Endothelial cell of umbilical vein (primary cell): ENCODE measurements at regions of chr10 and their contacts with region 1.

Region 1: DNA sequence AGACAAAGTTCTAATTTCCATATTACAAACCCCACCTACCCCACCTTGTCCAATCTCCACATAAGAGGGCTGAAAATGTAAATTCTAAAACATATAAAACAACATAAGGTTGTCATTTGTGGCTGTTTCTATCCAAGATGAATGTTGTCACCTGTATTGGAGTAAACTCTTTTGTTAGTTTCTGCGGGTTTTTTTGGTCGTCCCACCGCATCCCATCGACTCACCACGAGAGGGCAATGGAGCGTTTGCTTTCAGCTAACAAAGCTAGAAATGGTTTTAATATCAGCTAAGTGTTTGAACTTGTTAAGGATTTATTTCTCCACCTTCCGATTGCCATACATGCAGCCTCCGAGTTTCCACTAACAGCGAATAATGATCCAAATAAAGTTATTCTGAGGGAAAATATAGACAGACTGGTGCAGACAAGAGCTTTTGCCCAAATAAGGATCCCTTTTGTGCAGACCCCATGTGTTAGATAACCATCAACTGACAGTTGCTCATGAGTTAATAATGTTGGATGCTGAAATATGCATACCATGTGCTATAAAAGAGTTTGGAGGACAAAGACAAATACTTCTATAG is 137.2 kb downstream of the ARID5B start:
- DNase-seq: peak; percentile 85
- H3K4me3 ChIP-seq: no peak overlapping the region
- H3K27ac ChIP-seq: no peak overlapping the region
- H3K4me1 ChIP-seq: peaks cover 11% of the 10 kb centered on the region
- H3K27me3 ChIP-seq: no peaks in the 10 kb centered on the region
- CTCF ChIP-seq: peak; percentile 78 to 85
- POLR2A ChIP-seq: no peak

Region 2: DNA sequence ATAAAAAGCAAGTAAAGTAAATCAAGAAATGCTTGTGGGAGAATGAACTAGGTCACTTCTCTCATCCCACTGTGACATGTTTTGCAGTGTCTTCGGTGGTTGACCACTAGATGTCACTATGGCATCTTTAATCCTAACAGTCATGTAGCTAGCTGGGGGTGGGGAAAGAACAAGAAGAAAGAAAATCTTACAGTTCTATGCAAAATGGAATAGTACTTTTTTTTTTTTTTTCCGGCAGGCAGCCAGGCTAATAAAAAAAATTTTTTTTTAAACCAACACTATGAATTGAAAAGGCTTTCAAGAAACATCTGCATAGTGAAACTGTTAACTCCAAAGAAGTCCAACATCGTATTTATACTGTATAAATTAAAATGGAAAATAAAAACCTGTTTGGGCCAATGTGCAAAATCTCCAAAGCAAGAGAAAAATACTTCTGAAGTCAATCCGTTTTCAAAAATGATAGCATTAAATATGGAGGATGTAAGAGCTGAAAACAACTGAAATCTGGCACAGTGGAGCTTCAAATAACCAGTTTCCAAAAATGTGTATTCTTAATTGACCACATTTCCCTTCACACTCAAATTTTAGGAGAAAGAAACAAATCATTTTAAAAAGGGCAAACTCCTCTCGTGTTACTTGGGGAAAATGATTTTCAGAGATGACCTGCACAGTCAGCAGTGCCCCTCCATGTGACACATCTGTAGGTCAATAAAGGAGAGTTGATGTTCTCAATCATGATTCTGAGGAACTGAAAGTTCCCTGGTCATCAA is 1221.9 kb before region 1 on chr10:
- CTCF ChIA-PET with region 1: interaction called, 8 read pairs
- POLR2A ChIA-PET with region 1: no interaction called
- dilution Hi-C with region 1: no loop called
- intact Hi-C with region 1: loop called (anchors 5 kb)
- DNase-seq: peak; percentile 88
- H3K4me3 ChIP-seq: no peak overlapping the region
- H3K27ac ChIP-seq: peak overlapping the region; percentile 36
- H3K4me1 ChIP-seq: peaks cover 26% of the 10 kb centered on the region
- H3K27me3 ChIP-seq: no peaks in the 10 kb centered on the region
- CTCF ChIP-seq: peak; percentile 64 to 71
- POLR2A ChIP-seq: no peak

Region 3: GRCh38 chr10:61903221-61903927 is 135.3 kb before region 1 on chr10:
- CTCF ChIA-PET with region 1: interaction called, 18 read pairs
- POLR2A ChIA-PET with region 1: no interaction called
- dilution Hi-C with region 1: no loop called
- intact Hi-C with region 1: loop called (anchors 1 kb)
- DNase-seq: no peak
- H3K4me3 ChIP-seq: peak overlapping the region; percentile 26 to 79 (median 65)
- H3K27ac ChIP-seq: peak overlapping the region; percentile 59
- H3K4me1 ChIP-seq: peaks cover 28% of the 10 kb centered on the region
- H3K27me3 ChIP-seq: no peaks in the 10 kb centered on the region
- CTCF ChIP-seq: peak; percentile 5 to 18
- POLR2A ChIP-seq: no peak

Region 4: GRCh38 chr10:61943674-61944410 is 94.9 kb before region 1 on chr10:
- CTCF ChIA-PET with region 1: no interaction called
- POLR2A ChIA-PET with region 1: no interaction called
- dilution Hi-C with region 1: no loop called
- intact Hi-C with region 1: no loop called
- DNase-seq: peak; percentile 80
- H3K4me3 ChIP-seq: peak overlapping the region in 1 of 3 experiments; percentile 66
- H3K27ac ChIP-seq: peak overlapping the region; percentile 58
- H3K4me1 ChIP-seq: peaks cover 32% of the 10 kb centered on the region
- H3K27me3 ChIP-seq: no peaks in the 10 kb centered on the region
- CTCF ChIP-seq: peak in 1 of 2 donors; percentile 18
- POLR2A ChIP-seq: no peak

Region 5: DNA sequence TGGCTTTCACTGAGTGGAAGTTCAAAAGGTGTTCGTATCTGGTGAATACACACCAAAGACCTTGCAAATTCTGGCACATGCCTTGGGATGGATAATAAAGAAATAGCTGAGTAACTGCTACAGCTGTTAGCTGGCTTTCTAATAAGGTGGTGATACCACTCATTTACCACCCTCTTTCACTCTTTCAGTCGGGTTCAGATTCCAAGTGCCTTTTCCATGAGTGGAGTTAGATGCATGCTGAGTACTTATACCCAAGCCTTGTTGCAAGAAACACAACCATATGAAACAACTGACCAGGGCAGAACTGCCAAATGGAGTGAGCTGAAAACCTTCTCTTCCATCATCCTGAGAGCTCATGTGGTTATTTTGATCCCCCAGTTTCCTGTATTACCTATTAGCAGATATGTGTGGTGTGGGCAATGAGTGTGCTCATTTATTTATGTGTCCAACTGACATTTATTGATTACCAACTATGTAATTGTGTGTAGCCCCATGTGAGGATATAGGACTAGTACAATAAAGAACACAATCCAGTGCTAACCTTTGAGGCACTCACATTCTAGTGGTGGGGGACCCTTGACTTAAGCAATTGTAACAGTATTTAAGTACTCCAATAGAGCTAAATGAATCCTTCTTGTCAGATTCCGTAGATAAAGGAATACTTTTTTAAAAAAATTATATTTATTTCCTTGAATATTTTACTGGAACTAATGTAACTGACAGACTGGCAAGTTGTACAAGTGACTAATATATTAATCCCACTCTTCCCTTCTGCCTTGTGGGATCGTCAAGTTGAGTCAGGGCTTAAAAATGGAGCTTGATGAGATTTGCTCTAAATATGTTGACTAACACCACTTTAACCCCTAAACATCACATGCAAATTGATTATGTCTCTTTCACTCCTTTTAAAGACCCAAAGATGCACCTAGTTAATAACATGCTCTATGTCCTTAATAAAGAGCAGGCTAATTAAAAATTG is 12.5 kb before region 1 on chr10:
- CTCF ChIA-PET with region 1: interaction called, 18 read pairs
- POLR2A ChIA-PET with region 1: no interaction called
- dilution Hi-C with region 1: no loop called
- intact Hi-C with region 1: no loop called
- DNase-seq: no peak
- H3K4me3 ChIP-seq: no peak overlapping the region
- H3K27ac ChIP-seq: no peak overlapping the region
- H3K4me1 ChIP-seq: peaks cover 12% of the 10 kb centered on the region
- H3K27me3 ChIP-seq: no peaks in the 10 kb centered on the region
- CTCF ChIP-seq: no peak
- POLR2A ChIP-seq: no peak

Region 6: GRCh38 chr10:62130948-62131347 is 92.2 kb after region 1 on chr10:
- CTCF ChIA-PET with region 1: interaction called, 14 read pairs
- POLR2A ChIA-PET with region 1: no interaction called
- dilution Hi-C with region 1: no loop called
- intact Hi-C with region 1: loop called (anchors 2 kb)
- DNase-seq: peak; percentile 99
- H3K4me3 ChIP-seq: no peak overlapping the region
- H3K27ac ChIP-seq: peak overlapping the region; percentile 78
- H3K4me1 ChIP-seq: peaks cover 29% of the 10 kb centered on the region
- H3K27me3 ChIP-seq: no peaks in the 10 kb centered on the region
- CTCF ChIP-seq: no peak
- POLR2A ChIP-seq: peak; percentile 51

Region 7: DNA sequence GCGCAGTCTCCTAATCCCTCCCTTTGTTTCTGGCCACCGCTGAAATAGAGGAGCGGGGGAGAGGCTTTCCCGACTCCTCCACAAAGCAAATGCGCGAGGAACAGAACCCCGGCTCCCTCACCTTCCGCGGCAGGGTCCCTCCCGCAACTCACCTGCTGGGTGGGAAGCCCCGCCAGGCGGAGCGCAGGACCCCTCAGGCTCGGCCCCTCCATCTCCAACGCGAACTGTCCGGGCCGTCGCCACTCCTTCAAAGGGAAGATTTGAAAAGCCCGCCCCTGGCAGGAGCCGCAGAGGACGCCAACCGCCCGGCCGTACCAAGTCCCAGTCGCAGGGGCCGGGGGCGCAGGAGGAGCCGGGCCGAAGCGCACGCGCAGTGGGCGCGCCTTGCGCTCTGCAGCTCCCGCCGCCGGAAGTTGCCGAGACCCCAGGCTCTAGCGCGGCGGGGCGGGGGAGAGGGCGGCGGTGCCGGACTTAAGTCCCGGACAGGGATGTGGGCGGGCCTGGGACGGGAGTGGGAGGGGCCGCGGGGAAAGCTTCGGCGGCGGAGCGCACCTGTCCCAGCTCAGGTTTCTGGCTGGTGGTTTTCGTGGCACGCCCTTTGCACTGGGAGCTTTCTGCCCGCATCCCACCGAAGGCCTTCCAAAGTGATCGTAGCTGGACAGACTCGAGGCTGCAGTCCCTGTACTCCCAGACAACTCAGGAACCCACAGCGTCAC is 229.9 kb after region 1 on chr10 and contains the start of gene RTKN2:
- CTCF ChIA-PET with region 1: interaction called, 25 read pairs
- POLR2A ChIA-PET with region 1: no interaction called
- dilution Hi-C with region 1: no loop called
- intact Hi-C with region 1: no loop called
- DNase-seq: peak; percentile 85
- H3K4me3 ChIP-seq: peak within 1 kb of the TSS; percentile 53 to 73 (median 72)
- H3K27ac ChIP-seq: no peak within 1 kb of the TSS
- H3K4me1 ChIP-seq: peaks cover 11% of the 10 kb centered on the region
- H3K27me3 ChIP-seq: peaks cover 0 to 2% of the 10 kb centered on the region in 2 experiments
- CTCF ChIP-seq: no peak
- POLR2A ChIP-seq: no peak
- total RNA-seq, gene RTKN2: 4.8 and 5.5 TPM in 2 replicates

Region 8: GRCh38 chr10:62816331-62817120 is 777.8 kb after region 1 on chr10 and contains the start of gene EGR2:
- CTCF ChIA-PET with region 1: interaction called, 3 read pairs
- POLR2A ChIA-PET with region 1: no interaction called
- dilution Hi-C with region 1: no loop called
- intact Hi-C with region 1: loop called (anchors 2 kb)
- DNase-seq: peak; percentile 91
- H3K4me3 ChIP-seq: peak within 1 kb of the TSS; percentile 45 to 91 (median 51)
- H3K27ac ChIP-seq: peak within 1 kb of the TSS; percentile 32
- H3K4me1 ChIP-seq: peaks cover 24% of the 10 kb centered on the region
- H3K27me3 ChIP-seq: peaks cover 50 to 60% of the 10 kb centered on the region in 2 experiments
- CTCF ChIP-seq: no peak
- POLR2A ChIP-seq: no peak
- total RNA-seq, gene EGR2: 0.46 and 0.67 TPM in 2 replicates